GM10248 (cell line): ENCODE measurements at regions of chr15 and their contacts with region 1.

Region 1: GRCh38 chr15:48940448-48940893 is 23.2 kb downstream of the SHC4 start:
- DNase-seq: peak; percentile 58
- CTCF ChIP-seq: no peak

Region 2: GRCh38 chr15:48888836-48889235 is 51.6 kb before region 1 on chr15:
- CTCF ChIA-PET with region 1: no interaction called
- POLR2A ChIA-PET with region 1: no interaction called
- DNase-seq: no peak
- CTCF ChIP-seq: no peak

Region 3: GRCh38 chr15:48963524-48964113 is 23.1 kb after region 1 on chr15 and contains the start of gene SHC4:
- CTCF ChIA-PET with region 1: interaction called, 14 read pairs
- POLR2A ChIA-PET with region 1: no interaction called
- DNase-seq: peak; percentile 60
- CTCF ChIP-seq: no peak

Region 4: DNA sequence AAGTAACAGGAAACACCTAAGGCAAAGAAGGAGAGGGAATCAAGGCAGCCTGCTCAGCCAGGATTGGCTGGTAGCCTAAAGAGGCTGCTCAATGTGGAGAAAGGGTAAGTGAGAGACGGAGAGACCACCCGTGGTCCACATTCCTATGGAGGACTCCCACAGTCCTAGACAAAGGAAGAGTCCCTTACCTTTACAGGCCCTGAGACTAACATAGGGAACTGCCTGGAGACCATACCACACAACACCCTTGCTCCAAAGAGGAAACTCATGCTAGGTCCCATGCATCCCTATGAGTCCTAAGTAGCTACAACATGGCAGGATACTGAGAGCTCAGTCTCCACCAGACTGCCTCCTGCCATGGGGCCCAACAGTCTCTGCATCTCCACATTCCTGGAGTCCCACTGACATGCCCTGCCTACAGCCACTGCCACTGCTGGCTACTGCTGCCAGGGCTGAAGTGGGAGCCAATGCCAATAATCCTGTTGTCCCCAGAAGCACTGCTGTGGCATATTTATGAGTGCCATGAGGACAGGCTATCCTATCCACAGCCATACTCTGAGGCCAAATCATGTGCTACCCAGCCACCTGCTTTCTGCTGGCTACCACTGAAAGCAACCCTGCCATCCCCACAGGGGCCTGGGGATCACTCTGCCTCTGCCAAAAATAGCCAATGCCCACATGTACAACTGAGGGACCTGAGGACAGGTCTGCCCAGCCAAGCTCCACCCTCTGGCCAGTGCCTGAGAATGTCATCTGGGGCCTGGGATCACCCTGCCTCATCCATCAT is 169.9 kb after region 1 on chr15:
- CTCF ChIA-PET with region 1: no interaction called
- POLR2A ChIA-PET with region 1: no interaction called
- DNase-seq: no peak
- CTCF ChIP-seq: no peak